Thyroid gland (tissue), 4 donors: ENCODE measurements at regions of chr3 and their contacts with region 1.

Region 1: GRCh38 chr3:53129344-53129743 is 891 bp downstream of the RFT1 start:
- DNase-seq: no peak
- H3K4me3 ChIP-seq: peak overlapping the region in 1 of 3 donors; percentile 64
- H3K27ac ChIP-seq: peak overlapping the region in 2 of 3 donors; percentile 75 to 86
- H3K4me1 ChIP-seq: peaks cover 22 to 48% of the 10 kb centered on the region in 2 donors
- H3K27me3 ChIP-seq: no peaks in the 10 kb centered on the region
- CTCF ChIP-seq: no peak
- POLR2A ChIP-seq: no peak

Region 2: GRCh38 chr3:53166781-53167291 is 37.5 kb after region 1 on chr3:
- intact Hi-C with region 1: loop called (anchors 5 kb)
- DNase-seq: peak; percentile 72 to 80
- H3K4me3 ChIP-seq: no peak overlapping the region
- H3K27ac ChIP-seq: peak overlapping the region; percentile 74 to 98 (median 88)
- H3K4me1 ChIP-seq: peaks cover 61 to 81% of the 10 kb centered on the region in 2 donors
- H3K27me3 ChIP-seq: no peaks in the 10 kb centered on the region
- CTCF ChIP-seq: no peak
- POLR2A ChIP-seq: no peak